GM23248 (cell line): ENCODE measurements at regions of chr10 and their contacts with region 1.

Region 1: DNA sequence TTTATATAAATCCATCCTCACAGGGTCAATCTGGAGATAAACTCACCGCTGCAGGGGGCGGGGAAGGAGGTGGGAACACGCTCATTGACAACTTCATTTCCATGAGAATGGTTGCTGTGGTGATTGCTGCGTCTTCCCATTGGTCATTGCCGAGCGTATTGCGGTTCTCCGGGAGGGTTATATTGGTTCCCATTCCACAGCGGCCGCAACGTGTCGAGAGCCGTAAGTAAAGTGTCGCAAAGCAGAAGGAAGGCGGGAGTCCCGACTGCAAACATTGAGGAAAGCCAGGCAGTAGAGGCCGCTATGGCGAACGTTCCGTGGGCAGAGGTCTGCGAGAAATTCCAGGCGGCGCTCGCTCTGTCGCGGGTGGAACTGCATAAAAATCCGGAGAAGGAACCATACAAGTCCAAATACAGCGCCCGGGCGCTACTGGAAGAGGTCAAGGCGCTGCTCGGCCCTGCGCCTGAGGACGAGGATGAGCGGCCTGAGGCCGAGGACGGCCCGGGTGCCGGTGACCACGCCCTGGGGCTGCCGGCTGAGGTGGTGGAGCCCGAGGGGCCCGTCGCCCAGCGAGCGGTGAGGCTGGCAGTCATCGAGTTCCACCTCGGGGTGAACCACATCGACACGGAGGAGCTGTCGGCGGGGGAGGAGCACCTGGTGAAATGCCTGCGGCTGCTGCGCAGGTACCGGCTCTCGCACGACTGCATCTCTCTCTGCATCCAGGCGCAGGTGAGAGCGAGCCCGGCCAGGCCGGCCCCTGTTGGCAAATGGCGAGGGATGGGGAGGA is at the start of gene KIFBP:
- DNase-seq: peak; percentile 99
- H3K4me3 ChIP-seq: peak within 1 kb of the TSS; percentile 96
- H3K27ac ChIP-seq: peak within 1 kb of the TSS; percentile 73
- H3K4me1 ChIP-seq: peaks cover 35% of the 10 kb centered on the region
- H3K27me3 ChIP-seq: no peaks in the 10 kb centered on the region
- total RNA-seq, gene KIFBP: 56.5 and 58.3 TPM in 2 replicates

Region 2: DNA sequence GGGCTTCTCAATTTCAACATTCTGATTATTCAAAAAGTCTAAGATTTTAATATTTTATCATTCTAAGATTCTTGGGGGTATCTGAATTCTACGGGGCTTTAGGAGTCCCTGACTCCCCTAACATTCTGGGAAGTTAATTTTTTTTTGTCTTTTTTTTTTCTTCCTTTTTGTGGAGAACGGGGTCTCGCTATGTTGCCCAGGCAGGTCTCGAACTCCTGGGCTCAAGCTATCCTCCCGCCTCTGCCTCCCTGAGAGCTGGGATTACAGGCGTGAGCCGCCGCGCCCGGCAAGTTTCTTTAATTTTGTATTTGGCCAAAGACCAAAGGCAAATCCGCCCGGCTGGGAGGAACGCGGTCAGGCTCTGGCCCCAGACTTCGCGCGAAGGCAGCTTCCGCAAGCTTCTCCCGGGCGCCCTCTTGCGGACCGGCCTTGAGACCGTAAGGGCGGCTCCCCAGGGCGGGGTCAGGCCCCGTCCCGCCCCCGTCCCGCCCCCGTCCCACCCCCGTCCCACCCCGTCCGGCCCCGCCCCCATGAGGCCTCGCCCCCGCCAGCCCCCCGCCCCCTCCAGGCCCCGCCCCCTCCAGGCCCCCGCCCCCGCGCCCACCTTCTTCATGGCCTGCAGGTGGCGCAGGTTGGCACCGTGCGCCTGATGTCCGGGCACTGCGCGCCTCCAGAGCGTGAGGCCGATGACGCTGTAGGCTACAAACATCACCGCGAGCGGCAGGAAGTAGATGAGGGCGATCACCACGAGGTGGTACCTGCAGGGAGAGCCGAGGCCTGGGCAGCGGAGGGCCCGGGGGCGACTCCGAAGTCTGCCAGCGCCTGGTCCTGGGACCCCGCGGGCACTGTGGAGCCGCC is 419.8 kb after region 1 on chr10:
- in situ Hi-C with region 1: loop called (anchors 25 kb)
- DNase-seq: peak; percentile 98
- H3K4me3 ChIP-seq: peak overlapping the region; percentile 67
- H3K27ac ChIP-seq: peak overlapping the region; percentile 27; the same call in 1 of the 2 replicates
- H3K4me1 ChIP-seq: peaks cover 17% of the 10 kb centered on the region
- H3K27me3 ChIP-seq: no peaks in the 10 kb centered on the region